SK-N-SH (cell line): ENCODE measurements at regions of chr19 and their contacts with region 1.

Region 1: DNA sequence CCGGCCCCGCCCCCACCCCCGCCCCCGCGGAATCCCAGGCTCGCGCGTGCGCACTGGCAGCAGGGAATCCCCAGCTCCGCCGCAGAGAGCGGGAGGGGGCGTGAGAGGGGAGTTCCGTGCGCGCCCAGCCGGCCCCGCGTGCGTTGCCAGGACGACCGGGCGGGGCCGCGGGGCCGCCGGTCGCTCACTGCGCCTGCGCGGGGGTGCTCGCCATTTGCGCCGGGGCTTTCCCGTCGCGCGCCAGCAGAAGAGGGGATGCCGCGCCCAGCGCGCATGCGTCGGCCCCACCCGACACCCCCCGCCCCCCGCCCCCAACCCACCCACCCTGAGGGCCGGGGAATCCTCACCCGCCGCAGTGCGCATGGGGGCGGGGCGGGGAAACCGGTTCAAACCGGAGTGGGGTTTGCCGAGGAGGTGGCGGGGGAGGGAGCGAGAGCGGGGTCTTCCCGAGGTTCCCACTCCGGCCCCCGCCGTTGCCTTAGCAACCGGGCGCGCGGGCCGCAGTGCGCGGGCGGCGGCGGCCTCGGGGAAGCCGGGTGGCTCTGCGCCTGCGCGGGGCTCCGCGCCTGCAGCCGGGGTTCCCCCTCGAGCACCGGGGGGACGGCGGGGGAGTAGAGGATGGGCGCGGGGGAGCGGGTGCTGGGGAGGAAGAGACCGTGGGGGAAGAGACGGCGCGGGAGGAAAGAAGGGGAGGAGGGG is 15.1 kb downstream of the CCDC124 start:
- DNase-seq: peak; percentile 99
- H3K4me3 ChIP-seq: peak overlapping the region; percentile 49 to 59
- H3K27ac ChIP-seq: no peak overlapping the region; a peak in 1 of 4 replicates
- H3K4me1 ChIP-seq: peaks cover 11 to 22% of the 10 kb centered on the region in 2 experiments; a peak in 2 of 4 replicates
- H3K27me3 ChIP-seq: peaks cover 30% of the 10 kb centered on the region
- CTCF ChIP-seq: no peak
- EP300 ChIP-seq: 0 out of 4 replicates have a peak, but pooled peaks of 1 of the 2 experiments have one; percentile 13
- RAD21 ChIP-seq: no peak

Region 2: GRCh38 chr19:17966550-17967256 is 18.7 kb after region 1 on chr19 and contains the start of gene KCNN1:
- CTCF ChIA-PET with region 1: interaction called, 13 read pairs
- POLR2A ChIA-PET with region 1: no interaction called
- DNase-seq: peak; percentile 98
- H3K4me3 ChIP-seq: peak within 1 kb of the TSS; percentile 67 to 68
- H3K27ac ChIP-seq: no peak within 1 kb of the TSS
- H3K4me1 ChIP-seq: peaks cover 0 to 13% of the 10 kb centered on the region in 2 experiments; a peak in 2 of 4 replicates
- H3K27me3 ChIP-seq: 0 out of 2 replicates have a peak, but pooled peaks cover 4% of the 10 kb centered on the region
- CTCF ChIP-seq: no peak
- EP300 ChIP-seq: no peak
- RAD21 ChIP-seq: no peak
- polyA plus RNA-seq, gene KCNN1: 2.7 and 3.6 TPM in 2 replicates